ENCODE measurements at regions of chr7 and their contacts with region 1.

Region 1: DNA sequence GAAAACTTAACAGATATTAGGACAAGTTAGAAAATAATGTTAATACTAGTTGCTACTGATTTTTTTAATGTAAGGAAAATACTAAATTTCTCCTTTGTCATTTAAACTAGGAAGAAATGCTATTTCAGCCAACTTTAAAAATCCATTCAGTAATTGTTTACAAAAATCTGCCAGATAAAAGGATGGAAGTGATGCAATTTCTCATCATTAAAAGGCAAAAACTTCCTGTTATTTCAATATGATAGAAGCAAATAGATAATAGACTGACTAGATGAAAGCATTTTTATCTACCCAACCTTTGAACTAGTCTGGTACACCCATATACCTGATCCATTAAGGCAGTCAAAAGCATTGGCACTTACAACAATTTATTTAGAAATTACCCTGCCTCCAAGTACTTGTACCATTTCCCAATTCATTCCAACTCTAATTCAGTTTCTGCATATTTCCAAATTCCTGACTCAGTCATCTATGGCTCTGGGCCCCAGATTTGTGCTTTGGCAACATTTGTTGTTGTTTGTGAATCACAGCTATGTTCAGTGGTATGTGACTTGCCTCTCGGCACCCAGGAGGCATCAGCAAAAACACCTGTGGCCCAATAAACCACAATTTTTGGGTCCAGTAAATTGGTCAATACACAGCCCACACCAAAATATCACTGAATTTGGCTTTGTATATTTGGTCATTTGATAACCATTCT is 482.6 kb upstream of the SEMA3A start:
- DNase-seq: peak; percentile 75
- H3K4me3 Mint-ChIP-seq: no peak overlapping the region
- H3K27ac Mint-ChIP-seq: peak overlapping the region; percentile 37
- H3K4me1 Mint-ChIP-seq: peaks cover 27% of the 10 kb centered on the region
- H3K27me3 Mint-ChIP-seq: no peaks in the 10 kb centered on the region
- CTCF ChIP-seq: no peak

Region 2: DNA sequence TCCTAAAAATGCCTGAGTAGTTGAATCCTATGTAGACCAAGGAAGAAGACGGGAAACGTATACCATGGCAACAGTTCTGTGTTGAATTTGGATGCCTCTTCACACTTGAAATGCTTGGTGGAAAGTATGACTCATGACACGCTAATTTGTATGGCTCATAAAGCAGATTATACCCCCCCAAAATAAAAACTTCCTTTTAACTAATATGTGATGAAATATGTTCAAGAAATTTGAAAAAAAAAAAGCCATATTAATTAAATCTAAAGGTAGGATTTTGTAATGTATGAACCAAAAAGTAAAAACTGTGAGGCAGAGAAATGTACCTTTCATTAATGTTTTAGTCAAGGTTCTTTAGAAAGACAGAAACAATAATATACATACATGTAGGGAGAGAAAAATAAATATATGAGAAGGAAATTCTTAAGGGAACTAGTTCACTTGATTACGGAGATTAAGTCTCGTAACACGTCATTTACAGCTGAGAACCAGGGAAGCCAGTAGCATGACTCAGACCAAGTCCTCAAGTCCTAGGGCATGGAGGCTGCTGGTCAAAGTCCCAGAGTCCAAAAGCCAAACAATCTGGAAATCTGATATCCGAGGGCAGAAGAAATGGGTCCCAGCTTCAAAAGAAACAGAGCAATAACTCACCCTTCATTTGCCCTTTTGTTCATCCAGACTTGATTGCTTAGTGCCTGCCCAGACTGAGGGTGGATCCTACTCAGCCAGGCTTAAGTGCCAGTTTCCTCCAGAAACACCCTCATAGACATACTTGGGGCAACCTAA is 24.5 kb after region 1 on chr7:
- CTCF ChIA-PET with region 1: interaction called, 3 read pairs
- POLR2A ChIA-PET with region 1: interaction called, 6 read pairs
- intact Hi-C with region 1: loop called (anchors 1 kb)
- DNase-seq: peak; percentile 91
- H3K4me3 Mint-ChIP-seq: peak overlapping the region; percentile 15
- H3K27ac Mint-ChIP-seq: peak overlapping the region; percentile 97
- H3K4me1 Mint-ChIP-seq: no peaks in the 10 kb centered on the region
- H3K27me3 Mint-ChIP-seq: no peaks in the 10 kb centered on the region
- CTCF ChIP-seq: no peak

Measured in MCF 10A (cell line).